ENCODE measurements at regions of chr22 and their contacts with region 1.

Region 1: GRCh38 chr22:36144886-36145541 is 15.5 kb downstream of the APOL3 start:
- DNase-seq: no peak

Region 2: DNA sequence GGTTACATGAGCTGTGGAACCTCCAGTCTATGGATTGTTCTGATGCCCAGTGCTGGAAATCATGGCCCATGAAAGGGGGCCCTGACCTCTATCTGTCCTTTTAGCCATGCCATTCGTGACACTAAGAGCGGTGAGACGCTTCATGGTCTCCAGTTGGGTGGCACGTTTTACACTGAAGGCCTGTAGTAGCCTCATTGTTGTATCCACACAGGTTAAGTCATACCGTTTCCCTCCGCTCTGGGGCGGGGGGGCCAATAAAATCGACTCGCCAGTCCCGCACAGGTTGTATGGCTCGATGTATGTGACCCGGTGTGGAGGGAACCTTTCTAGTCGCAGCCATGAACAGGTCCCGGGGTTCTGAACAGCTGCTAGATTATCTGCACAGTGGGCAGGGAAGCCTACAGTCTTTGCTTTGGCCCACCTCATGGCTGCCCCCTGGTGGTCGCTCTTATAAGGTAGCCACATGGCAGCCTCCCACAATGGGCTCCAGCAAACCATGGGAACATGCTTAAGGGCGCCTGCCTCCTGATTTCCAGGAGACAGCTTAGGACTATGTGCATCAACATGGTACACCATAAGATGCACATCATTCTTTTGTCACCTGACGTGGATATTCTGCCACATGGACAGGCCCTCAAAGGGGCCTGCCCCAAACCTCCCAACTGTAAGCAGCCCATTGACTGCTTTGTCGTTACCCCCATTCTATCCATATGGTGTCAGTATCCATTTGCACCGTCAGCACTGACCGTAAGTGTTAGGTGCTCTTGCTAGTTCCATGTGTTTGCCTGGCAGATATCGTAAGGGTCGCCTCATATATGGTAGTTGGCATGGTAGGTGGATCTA is 35.2 kb after region 1 on chr22:
- intact Hi-C with region 1: loop called (anchors 2 kb)
- DNase-seq: peak; percentile 90

Region 3: DNA sequence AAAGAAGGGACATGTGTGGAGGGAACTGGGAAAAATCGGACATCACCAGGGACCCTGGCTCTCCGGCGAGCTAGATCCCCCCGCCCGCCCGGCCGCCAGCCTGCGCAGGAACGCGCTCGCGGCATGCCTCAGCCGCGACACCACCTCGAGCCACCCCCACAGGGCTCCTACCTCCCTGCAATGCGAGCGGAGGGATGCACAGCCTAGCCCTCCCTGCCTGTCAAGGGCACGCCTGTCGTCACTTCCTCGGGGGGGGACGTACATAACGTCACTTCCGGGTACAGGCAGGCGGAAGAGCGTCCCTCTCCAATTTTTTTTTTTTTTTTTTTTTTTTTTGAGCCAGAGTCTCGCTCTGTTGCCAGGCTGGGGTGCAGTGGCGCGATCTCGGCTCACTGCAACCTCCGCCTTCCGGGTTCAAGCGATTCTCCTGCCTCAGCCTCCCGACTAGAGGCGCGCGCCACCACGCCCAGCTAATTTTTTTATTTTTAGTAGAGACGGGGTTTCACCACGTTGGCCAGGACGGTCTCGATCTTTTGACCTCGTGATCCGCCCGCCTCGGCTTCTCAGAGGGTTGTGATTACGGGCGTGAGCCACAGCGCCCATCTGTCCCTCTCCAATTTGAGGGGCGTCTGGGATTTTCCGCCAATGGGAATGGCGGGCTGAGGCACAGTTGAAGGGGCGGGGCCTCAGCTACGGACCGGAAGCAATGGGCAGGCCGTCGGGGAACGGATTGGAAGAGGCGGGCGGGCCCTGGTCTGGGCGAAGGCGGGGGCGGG is 336.6 kb after region 1 on chr22 and contains the start of gene TXN2:
- intact Hi-C with region 1: loop called (anchors 10 kb)
- DNase-seq: peak; percentile 97
- total RNA-seq, gene TXN2: 92.8 TPM

Region 4: GRCh38 chr22:37273126-37273845 is 1128.3 kb after region 1 on chr22:
- intact Hi-C with region 1: no loop called
- DNase-seq: no peak